ENCODE measurements at regions of chr9 and their contacts with region 1.

Region 1: GRCh38 chr9:113564498-113565237 is 101.1 kb downstream of the RGS3 start:
- DNase-seq: peak; percentile 73 to 79
- ATAC-seq: peak; percentile 70 to 87 (median 83)
- H3K4me3 ChIP-seq: peak overlapping the region; percentile 4 to 61 (median 48)
- H3K27ac ChIP-seq: peak overlapping the region; percentile 68 to 99 (median 86)
- H3K4me1 ChIP-seq: peaks cover 21 to 90% (median 72%) of the 10 kb centered on the region in 9 donors
- H3K27me3 ChIP-seq: no peaks in the 10 kb centered on the region
- CTCF ChIP-seq: no peak

Region 2: DNA sequence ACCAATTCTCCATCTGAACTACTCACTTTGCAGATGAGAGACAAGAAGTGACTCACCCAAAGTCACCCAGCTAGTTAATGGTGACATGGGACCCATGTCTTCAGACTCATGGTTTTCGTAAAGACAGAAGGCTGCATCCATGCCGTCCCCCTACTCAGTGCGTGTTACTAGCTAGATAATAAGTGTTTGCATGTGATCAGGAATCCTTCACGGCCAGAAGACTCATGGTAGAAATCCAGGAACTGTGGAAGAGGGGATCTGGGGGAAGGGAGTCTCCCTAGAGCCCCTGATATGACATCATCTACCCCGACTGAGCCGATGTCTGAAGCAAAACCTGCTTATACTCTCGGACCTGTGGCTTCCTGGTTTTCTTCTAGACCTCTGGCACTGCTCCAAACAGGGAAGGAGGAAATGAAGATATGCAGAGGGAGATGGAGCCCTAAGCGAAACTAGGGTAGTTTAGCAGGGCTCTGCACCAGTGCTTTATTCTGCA is 264.8 kb before region 1 on chr9:
- intact Hi-C with region 1: no loop called
- DNase-seq: peak in 1 of 2 donors; percentile 27
- ATAC-seq: peak in 4 of 8 donors; percentile 15 to 49 (median 31)
- H3K4me3 ChIP-seq: peak overlapping the region in 1 of 10 donors; percentile 20
- H3K27ac ChIP-seq: no peak overlapping the region
- H3K4me1 ChIP-seq: peaks cover 0 to 9% (median 0%) of the 10 kb centered on the region in 9 donors
- H3K27me3 ChIP-seq: no peaks in the 10 kb centered on the region
- CTCF ChIP-seq: no peak

Region 3: DNA sequence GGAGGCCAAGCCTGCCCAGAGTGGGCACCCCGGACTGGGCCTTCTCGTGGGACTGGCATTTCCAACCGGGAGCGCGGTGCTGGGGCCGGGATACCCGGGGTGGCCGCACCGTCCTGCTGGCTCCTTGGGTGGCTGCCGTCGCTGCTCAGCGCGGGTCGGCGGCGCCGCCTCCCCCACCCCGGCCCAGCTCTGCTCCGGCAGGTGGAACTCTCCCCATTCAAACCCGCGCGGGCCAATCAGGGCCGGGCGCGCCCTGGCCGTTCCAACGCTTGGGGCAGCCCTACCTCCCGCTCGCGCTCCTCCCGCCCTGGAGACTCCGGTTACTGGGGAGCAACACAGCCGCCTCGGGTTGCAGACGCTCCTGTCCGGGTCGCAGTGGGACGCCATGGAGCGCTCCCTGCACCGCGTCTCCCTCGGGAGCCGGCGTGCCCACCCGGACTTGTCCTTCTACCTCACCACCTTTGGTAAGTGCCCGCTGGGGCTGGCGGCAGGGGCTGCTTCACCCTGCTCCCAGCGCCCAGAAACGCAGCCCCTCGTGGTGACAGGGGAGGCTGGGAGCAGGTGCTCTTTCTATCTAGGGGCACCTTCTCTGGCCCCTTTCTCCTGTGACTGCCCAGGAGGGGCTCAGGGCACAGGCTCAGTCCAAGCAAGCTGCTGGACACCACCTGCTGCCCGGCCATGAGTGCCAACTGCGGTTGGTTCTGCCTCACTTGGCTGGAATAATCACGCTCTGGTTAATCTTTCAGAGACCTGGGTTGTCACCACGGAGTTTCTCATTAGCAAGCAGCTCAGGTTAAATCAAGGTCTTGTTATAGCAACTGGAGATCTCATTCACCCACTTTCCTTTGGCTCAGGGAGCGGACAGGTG is 101.0 kb before region 1 on chr9 and contains the start of gene RGS3:
- intact Hi-C with region 1: loop called in 1 of 10 experiments (anchors 5 kb)
- DNase-seq: peak; percentile 63 to 69
- ATAC-seq: peak; percentile 90 to 97 (median 95)
- H3K4me3 ChIP-seq: peak within 1 kb of the TSS in 9 of 10 donors; percentile 27 to 59 (median 48)
- H3K27ac ChIP-seq: peak within 1 kb of the TSS; percentile 55 to 91 (median 72)
- H3K4me1 ChIP-seq: peaks cover 0 to 25% (median 9%) of the 10 kb centered on the region in 9 donors
- H3K27me3 ChIP-seq: peaks cover 0 to 11% (median 0%) of the 10 kb centered on the region in 7 donors
- CTCF ChIP-seq: peak in 3 of 9 donors; percentile 30 to 44 (median 31)
- total RNA-seq, gene RGS3: 98.7 to 201 (median 140) TPM

Region 4: DNA sequence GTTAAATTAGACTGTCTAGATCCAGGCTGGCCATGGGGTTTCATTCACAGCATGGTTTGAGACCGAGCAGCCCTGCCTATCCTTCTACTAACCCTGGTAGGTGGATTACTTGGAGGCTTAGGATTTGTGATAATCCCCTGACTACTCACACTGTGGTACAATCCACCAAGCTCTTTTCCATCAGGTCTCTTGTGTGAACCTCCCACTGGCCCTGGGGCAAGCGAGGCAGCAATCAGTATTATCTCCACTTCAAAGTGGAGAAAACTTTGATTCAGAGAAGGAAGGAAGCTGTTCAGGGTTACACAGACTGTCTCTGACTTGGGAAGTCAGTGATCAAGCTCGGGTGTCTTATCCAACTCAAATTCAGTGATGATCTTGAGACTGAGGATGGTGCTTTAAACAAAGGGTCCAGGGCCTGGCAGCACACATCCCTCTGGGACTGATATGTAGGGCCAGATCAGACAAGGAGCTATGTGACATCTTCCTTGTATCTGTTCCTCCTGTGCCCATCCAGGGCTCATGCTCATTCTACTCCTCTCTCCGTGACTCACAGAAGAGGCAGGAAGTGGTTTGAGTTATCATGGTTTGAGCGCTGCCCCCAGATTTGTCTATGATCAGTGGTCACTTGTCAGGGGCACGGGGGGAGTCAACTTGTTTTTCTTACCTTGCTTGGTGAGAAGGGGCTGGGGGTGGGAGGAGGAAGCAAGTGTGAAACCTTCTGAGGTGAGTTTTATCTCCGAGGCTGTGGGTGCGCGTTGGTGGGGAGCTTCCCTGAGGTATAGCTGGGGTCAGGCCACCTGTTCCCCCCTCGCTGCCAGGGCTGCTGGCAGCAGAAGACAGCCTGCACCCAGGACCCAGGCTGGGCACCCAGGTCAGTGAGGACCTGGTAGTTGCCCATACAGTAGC is 52.6 kb before region 1 on chr9:
- intact Hi-C with region 1: loop called in 1 of 10 experiments (anchors 10 kb)
- DNase-seq: no peak
- ATAC-seq: no peak
- H3K4me3 ChIP-seq: no peak overlapping the region
- H3K27ac ChIP-seq: peak overlapping the region in 8 of 10 donors; percentile 24 to 96 (median 74)
- H3K4me1 ChIP-seq: peaks cover 11 to 66% (median 45%) of the 10 kb centered on the region in 9 donors
- H3K27me3 ChIP-seq: no peaks in the 10 kb centered on the region
- CTCF ChIP-seq: no peak

Region 5: DNA sequence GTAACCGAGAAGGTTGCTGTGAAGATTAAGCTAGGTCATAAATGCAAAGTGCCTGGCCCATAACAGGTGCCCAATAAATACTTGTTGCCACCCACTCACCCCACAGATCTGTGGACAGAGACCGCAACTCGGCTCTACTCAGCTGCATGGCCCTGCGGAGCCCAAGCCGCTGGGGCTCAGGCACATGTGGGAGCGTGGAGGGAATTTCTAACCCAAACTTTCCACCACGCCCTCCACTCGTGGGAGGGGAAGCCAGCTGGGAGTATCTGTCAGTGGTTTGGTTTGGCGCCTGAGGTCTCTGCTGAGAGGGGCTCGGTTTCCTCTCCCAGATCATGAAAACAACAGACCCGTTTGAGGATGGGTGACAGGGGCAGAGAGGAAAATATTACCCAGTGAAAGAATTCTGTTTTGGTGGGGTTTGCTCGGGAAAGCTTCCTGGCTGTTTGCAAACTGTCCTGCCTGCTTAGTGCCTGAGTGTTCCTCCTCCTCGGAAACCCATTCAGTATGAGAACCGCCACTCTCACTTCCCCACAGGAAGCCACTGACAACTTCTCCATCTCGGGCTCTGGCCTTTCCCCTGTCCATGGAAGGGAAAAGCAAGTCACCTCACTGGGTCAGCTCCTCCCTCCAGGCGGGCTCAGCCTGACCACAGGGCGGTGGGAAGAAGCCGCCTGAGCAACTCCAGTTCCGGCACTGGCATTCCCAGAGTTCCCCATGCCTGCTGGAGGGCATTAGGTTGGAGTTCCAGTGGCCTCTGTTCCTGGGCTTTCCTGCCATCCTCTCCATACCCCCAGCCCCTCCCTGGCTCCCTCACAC is 41.0 kb before region 1 on chr9:
- intact Hi-C with region 1: loop called in 2 of 10 experiments (anchors 5 to 10 kb)
- DNase-seq: peak; percentile 63 to 75
- ATAC-seq: peak; percentile 50 to 76 (median 60)
- H3K4me3 ChIP-seq: peak overlapping the region in 5 of 10 donors; percentile 1 to 12 (median 9)
- H3K27ac ChIP-seq: peak overlapping the region; percentile 65 to 87 (median 79)
- H3K4me1 ChIP-seq: peaks cover 47 to 100% (median 88%) of the 10 kb centered on the region in 9 donors
- H3K27me3 ChIP-seq: no peaks in the 10 kb centered on the region
- CTCF ChIP-seq: no peak